CD8-positive, alpha-beta memory T cell (primary cell): ENCODE measurements at regions of chr19 and their contacts with region 1.

Region 1: GRCh38 chr19:12983542-12984142 is 11.6 kb upstream of the NFIX start:
- DNase-seq: peak; percentile 72 to 84 (median 78)
- H3K4me3 ChIP-seq: peak overlapping the region; percentile 47
- H3K4me3 Mint-ChIP-seq: no peak overlapping the region
- H3K27ac ChIP-seq: no peak overlapping the region
- H3K27ac Mint-ChIP-seq: no peak overlapping the region
- H3K4me1 ChIP-seq: peaks cover 28% of the 10 kb centered on the region
- H3K4me1 Mint-ChIP-seq: peaks cover 8 to 10% (median 10%) of the 10 kb centered on the region in 3 donors
- H3K27me3 ChIP-seq: peaks cover 7% of the 10 kb centered on the region
- H3K27me3 Mint-ChIP-seq: peaks cover 5 to 11% of the 10 kb centered on the region in 2 donors

Region 2: GRCh38 chr19:12956446-12957388 is 26.9 kb before region 1 on chr19 and contains the start of gene GADD45GIP1:
- CTCF ChIA-PET with region 1: no interaction called
- POLR2A ChIA-PET with region 1: no interaction called
- DNase-seq: peak; percentile 63 to 85 (median 75)
- H3K4me3 ChIP-seq: peak within 1 kb of the TSS; percentile 73
- H3K4me3 Mint-ChIP-seq: peak within 1 kb of the TSS; percentile 86 to 93 (median 89)
- H3K27ac ChIP-seq: peak within 1 kb of the TSS; percentile 67
- H3K27ac Mint-ChIP-seq: peak within 1 kb of the TSS; percentile 65 to 95 (median 92)
- H3K4me1 ChIP-seq: peaks cover 15% of the 10 kb centered on the region
- H3K4me1 Mint-ChIP-seq: peaks cover 22 to 30% (median 24%) of the 10 kb centered on the region in 3 donors
- H3K27me3 ChIP-seq: no peaks in the 10 kb centered on the region
- H3K27me3 Mint-ChIP-seq: no peaks in the 10 kb centered on the region
- total RNA-seq, gene GADD45GIP1: 37.3 to 38.6 TPM

Region 3: GRCh38 chr19:13002166-13002898 is 18.7 kb after region 1 on chr19:
- CTCF ChIA-PET with region 1: no interaction called
- POLR2A ChIA-PET with region 1: no interaction called
- DNase-seq: no peak
- H3K4me3 ChIP-seq: no peak overlapping the region
- H3K4me3 Mint-ChIP-seq: no peak overlapping the region
- H3K27ac ChIP-seq: no peak overlapping the region
- H3K27ac Mint-ChIP-seq: no peak overlapping the region
- H3K4me1 ChIP-seq: no peaks in the 10 kb centered on the region
- H3K4me1 Mint-ChIP-seq: peaks cover 0 to 3% (median 0%) of the 10 kb centered on the region in 3 donors
- H3K27me3 ChIP-seq: no peaks in the 10 kb centered on the region
- H3K27me3 Mint-ChIP-seq: peaks cover 8 to 17% of the 10 kb centered on the region in 2 donors

Region 4: DNA sequence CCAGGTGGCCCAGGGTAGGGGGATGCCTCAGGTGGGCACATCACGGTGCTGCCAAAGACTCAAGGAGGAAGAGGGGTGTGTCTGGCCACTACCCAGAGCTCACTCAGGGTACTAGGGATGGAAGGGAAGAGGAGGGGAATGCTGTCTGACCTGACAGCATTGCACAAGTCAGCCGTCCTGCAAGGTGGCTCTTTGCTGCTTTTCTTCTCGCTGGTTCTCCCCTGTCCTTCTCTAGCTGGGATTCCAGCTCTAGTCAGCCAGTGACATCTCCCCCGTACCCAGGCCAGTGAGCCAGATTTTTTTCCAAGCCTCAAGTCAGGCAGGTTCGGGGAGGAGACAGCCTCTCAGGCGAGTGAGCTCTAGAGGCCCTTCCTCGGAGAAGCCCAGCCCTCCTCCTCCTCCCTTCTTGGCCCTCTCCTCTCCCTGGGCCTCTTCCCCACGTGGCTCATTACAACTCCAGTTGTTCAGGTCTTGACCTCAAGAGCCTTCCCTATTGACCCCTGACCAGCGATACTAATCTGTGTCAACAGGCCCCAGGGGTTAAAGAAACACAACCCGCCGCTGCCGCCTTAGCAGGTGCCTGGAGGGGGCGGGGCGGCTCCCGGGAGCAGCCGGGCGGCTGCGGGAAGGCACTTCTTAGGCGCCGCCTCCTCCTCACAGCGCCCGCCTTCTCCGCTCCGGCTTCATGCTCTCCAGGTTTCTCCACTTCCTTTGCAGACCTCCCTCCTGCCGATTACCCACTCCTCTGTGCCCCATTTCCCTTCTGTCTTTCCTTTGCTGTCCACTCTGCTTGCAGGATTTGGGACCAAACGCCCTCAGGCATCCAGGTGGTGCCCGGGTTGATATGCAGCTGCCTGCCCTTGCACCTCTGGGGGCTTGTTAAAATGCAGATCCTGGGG is 67.9 kb after region 1 on chr19:
- CTCF ChIA-PET with region 1: no interaction called
- POLR2A ChIA-PET with region 1: no interaction called
- DNase-seq: no peak
- H3K4me3 ChIP-seq: peak overlapping the region; percentile 17
- H3K4me3 Mint-ChIP-seq: peak overlapping the region in 3 of 7 donors; percentile 48 to 76 (median 72)
- H3K27ac ChIP-seq: no peak overlapping the region
- H3K27ac Mint-ChIP-seq: peak overlapping the region in 1 of 8 donors; percentile 96
- H3K4me1 ChIP-seq: peaks cover 14% of the 10 kb centered on the region
- H3K4me1 Mint-ChIP-seq: peaks cover 4 to 7% (median 5%) of the 10 kb centered on the region in 3 donors
- H3K27me3 ChIP-seq: no peaks in the 10 kb centered on the region
- H3K27me3 Mint-ChIP-seq: peaks cover 14 to 23% of the 10 kb centered on the region in 2 donors

Region 5: DNA sequence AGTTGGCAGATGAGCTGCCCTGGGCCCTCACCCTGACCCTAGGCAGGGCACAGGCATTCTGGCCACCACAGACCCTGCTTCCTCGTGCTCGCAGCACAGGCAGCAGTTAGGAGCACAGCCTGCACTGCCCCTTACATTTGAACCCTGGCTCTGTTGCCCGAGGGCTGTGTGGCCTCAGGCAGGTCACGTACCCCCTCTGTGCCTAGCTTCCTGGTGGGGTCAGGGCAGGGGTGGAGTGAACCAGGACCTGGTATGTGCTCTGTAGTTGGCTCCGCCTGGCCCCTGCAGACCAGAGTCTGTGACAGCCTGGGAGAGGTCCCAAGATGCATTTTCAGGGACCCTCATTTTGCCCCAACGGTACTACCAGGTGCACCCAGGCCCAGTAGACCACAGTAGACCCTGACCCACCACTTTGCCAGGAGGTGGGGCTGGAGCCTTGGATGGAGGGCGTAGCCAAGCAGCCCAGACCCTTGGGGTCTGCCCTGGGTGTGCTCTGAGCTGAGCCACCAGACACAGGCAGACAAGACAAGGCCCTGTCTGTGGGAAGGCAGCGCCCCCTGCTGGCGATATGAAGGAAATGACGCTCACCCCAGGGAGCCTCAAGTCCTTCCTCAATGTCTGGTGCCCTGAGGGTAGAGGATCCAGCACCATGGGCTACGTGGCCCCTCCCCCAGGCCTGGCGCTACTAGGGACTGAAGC is 109.9 kb after region 1 on chr19:
- CTCF ChIA-PET with region 1: interaction called, 71 read pairs
- POLR2A ChIA-PET with region 1: no interaction called
- DNase-seq: peak; percentile 66 to 86 (median 72)
- H3K4me3 ChIP-seq: no peak overlapping the region
- H3K4me3 Mint-ChIP-seq: no peak overlapping the region
- H3K27ac ChIP-seq: no peak overlapping the region
- H3K27ac Mint-ChIP-seq: peak overlapping the region in 1 of 8 donors; percentile 6
- H3K4me1 ChIP-seq: peaks cover 29% of the 10 kb centered on the region
- H3K4me1 Mint-ChIP-seq: peaks cover 15 to 34% (median 16%) of the 10 kb centered on the region in 3 donors
- H3K27me3 ChIP-seq: peaks cover 17% of the 10 kb centered on the region
- H3K27me3 Mint-ChIP-seq: peaks cover 19 to 27% of the 10 kb centered on the region in 2 donors

Region 6: GRCh38 chr19:13099073-13099999 is 115.7 kb after region 1 on chr19:
- CTCF ChIA-PET with region 1: interaction called, 71 read pairs
- POLR2A ChIA-PET with region 1: no interaction called
- DNase-seq: peak; percentile 73 to 88 (median 80)
- H3K4me3 ChIP-seq: peak overlapping the region; percentile 60
- H3K4me3 Mint-ChIP-seq: peak overlapping the region; percentile 66 to 85 (median 81)
- H3K27ac ChIP-seq: peak overlapping the region; percentile 82
- H3K27ac Mint-ChIP-seq: peak overlapping the region; percentile 86 to 100 (median 96)
- H3K4me1 ChIP-seq: peaks cover 81% of the 10 kb centered on the region
- H3K4me1 Mint-ChIP-seq: peaks cover 46 to 78% (median 51%) of the 10 kb centered on the region in 3 donors
- H3K27me3 ChIP-seq: peaks cover 17% of the 10 kb centered on the region
- H3K27me3 Mint-ChIP-seq: peaks cover 23 to 28% of the 10 kb centered on the region in 2 donors

Region 7: GRCh38 chr19:13262450-13262849 is 278.8 kb after region 1 on chr19:
- CTCF ChIA-PET with region 1: interaction called, 11 read pairs
- POLR2A ChIA-PET with region 1: no interaction called
- DNase-seq: peak in 2 of 5 donors; percentile 36 to 38
- H3K4me3 ChIP-seq: no peak overlapping the region
- H3K4me3 Mint-ChIP-seq: no peak overlapping the region
- H3K27ac ChIP-seq: no peak overlapping the region
- H3K27ac Mint-ChIP-seq: no peak overlapping the region
- H3K4me1 ChIP-seq: no peaks in the 10 kb centered on the region
- H3K4me1 Mint-ChIP-seq: peaks cover 0 to 3% (median 0%) of the 10 kb centered on the region in 3 donors
- H3K27me3 ChIP-seq: no peaks in the 10 kb centered on the region
- H3K27me3 Mint-ChIP-seq: peaks cover 4 to 20% of the 10 kb centered on the region in 2 donors

Region 8: GRCh38 chr19:13588957-13589833 is 605.6 kb after region 1 on chr19:
- CTCF ChIA-PET with region 1: interaction called, 11 read pairs
- POLR2A ChIA-PET with region 1: no interaction called
- DNase-seq: peak; percentile 67 to 80 (median 72)
- H3K4me3 ChIP-seq: peak overlapping the region; percentile 27
- H3K4me3 Mint-ChIP-seq: no peak overlapping the region
- H3K27ac ChIP-seq: no peak overlapping the region
- H3K27ac Mint-ChIP-seq: peak overlapping the region in 1 of 8 donors; percentile 70
- H3K4me1 ChIP-seq: no peaks in the 10 kb centered on the region
- H3K4me1 Mint-ChIP-seq: peaks cover 0 to 4% (median 0%) of the 10 kb centered on the region in 3 donors
- H3K27me3 ChIP-seq: no peaks in the 10 kb centered on the region
- H3K27me3 Mint-ChIP-seq: peaks cover 11 to 42% of the 10 kb centered on the region in 2 donors